Psoas muscle (tissue), 8 donors: ENCODE measurements at regions of chr2 and their contacts with region 1.

Region 1: GRCh38 chr2:101124643-101125366 is 26.4 kb downstream of the TBC1D8 start:
- DNase-seq: peak; percentile 82 to 93
- ATAC-seq: peak; percentile 55 to 71 (median 60)
- H3K4me3 ChIP-seq: peak overlapping the region; percentile 31
- H3K27ac ChIP-seq: peak overlapping the region; percentile 94
- H3K4me1 ChIP-seq: peaks cover 66% of the 10 kb centered on the region
- H3K27me3 ChIP-seq: no peaks in the 10 kb centered on the region
- CTCF ChIP-seq: no peak

Region 2: GRCh38 chr2:101113396-101114267 is 11.2 kb before region 1 on chr2:
- intact Hi-C with region 1: loop called in 1 of 2 experiments (anchors 1 kb)
- DNase-seq: no peak
- ATAC-seq: peak; percentile 19 to 47 (median 38)
- H3K4me3 ChIP-seq: no peak overlapping the region
- H3K27ac ChIP-seq: peak overlapping the region; percentile 94
- H3K4me1 ChIP-seq: peaks cover 81% of the 10 kb centered on the region
- H3K27me3 ChIP-seq: no peaks in the 10 kb centered on the region
- CTCF ChIP-seq: no peak